ENCODE measurements at regions of chr12 and their contacts with region 1.

Region 1: DNA sequence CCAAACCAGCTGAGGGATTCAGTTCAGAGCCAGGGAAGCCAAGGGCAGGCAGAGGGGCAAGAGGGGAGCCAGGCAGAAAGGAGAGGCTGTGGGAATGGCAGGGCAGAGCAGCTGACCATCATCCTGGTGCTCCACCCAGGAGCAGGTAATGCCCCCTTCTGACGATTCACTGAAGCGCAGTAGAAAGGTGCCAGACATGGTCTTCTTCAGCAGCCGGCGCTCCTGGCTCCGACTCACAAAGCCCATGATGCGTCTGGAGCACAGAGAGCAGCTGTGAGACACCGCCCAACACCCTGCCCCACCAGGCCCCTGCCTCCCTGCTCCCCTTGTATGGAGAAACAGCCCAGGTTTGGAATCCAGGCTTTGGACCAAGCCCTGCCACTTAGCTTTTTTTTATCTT is 8.0 kb downstream of the IL23A start:
- DNase-seq: no peak
- H3K4me3 ChIP-seq: no peak overlapping the region
- H3K27ac ChIP-seq: no peak overlapping the region
- H3K4me1 ChIP-seq: no peaks in the 10 kb centered on the region
- H3K27me3 ChIP-seq: no peaks in the 10 kb centered on the region
- CTCF ChIP-seq: peak in 1 of 2 donors; percentile 14

Region 2: DNA sequence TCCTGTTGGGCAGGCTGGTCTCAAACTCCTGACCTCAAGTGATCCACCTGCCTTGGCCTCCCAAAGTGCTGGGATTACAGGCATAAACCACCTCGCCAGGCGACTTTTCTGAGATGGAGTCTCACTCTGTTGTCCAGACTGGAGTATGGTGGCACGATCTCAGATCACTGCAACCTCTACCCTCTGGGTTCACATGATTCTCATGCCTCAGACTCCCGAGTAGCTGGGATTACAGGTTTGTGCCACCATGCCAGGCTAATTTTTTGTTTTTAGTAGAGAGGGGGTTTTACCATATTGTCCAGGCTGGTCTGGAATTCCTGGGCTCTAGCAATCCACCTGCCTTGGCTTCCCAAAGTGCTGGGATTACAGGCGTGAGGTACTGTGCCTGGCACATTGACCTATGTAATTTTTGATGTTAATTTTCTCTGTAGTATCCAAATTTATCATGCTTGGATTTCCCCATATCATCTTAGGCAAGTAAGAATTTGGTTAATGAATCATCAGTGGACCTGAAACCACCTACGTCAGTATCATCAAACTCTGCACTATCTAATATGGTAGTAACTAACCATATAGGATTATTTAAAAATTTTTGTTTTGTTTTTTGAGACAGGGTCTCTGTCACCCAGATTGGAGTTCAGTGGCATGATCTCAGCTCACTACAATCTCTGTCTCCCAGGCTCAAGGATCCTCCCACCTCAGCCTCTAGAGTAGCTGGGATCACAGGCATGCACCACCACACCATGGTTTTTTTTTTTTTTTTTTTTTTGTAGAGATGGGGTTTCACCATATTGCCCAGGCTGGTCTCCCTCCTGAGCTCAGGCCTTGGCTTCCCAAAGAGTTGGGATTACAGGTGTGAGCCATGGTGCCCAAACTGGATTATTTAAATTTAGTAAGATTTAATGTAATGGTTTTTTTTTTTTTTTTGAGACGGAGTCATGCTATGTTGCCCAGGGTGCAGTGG is 311.0 kb after region 1 on chr12:
- CTCF ChIA-PET with region 1: interaction called, 23 read pairs
- dilution Hi-C with region 1: no loop called
- in situ Hi-C with region 1: no loop called
- intact Hi-C with region 1: no loop called
- DNase-seq: peak; percentile 51
- H3K4me3 ChIP-seq: no peak overlapping the region
- H3K27ac ChIP-seq: no peak overlapping the region
- H3K4me1 ChIP-seq: peaks cover 9% of the 10 kb centered on the region
- H3K27me3 ChIP-seq: no peaks in the 10 kb centered on the region
- CTCF ChIP-seq: no peak

Measured in mammary epithelial cell (primary cell).